ENCODE measurements at regions of chr7 and their contacts with region 1.

Region 1: DNA sequence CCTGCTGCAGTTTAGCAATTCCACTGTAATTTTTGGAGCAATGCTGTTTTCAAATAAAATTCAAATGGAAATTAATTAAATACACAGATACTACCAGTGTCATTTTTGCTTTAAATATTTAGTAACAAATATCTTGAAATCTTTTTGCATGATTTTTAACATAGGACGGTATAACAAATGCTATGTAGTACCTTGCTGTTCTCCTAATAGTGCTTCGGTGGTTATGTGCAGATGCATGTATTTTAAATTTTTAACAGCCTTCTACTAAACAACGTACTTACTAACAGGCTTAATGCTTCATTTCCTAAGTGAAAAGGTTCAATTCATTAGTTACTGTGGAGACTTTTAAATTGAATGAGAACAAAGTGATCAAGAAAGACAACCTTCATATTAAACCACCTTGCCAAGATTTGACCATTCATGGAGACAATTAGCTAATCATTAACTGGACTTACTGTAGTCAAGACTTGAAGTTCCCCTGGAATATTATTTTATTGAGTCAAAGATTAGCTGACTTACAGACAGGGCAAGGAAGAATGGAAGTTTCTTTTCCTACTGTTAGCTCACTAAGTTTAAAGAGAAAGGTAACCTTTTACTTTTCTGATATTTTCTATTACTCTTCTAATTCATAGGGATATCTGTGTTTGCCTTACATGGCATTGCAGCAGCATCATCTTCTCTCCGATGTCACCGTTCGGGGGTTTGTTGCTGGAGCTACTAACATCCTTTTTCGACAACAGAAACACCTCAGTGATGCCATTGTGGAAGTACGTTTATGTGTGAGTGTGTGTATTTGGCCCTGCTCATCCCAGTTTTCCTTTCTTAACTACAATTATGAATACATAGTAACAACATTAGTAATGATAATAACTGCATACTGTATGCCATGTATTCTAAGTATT is 74.3 kb downstream of the AVL9 start:
- DNase-seq: no peak
- H3K4me3 ChIP-seq: no peak overlapping the region
- H3K4me3 Mint-ChIP-seq: no peak overlapping the region
- H3K27ac Mint-ChIP-seq: no peak overlapping the region
- H3K4me1 ChIP-seq: no peaks in the 10 kb centered on the region
- H3K4me1 Mint-ChIP-seq: no peaks in the 10 kb centered on the region
- H3K27me3 ChIP-seq: no peaks in the 10 kb centered on the region
- H3K27me3 Mint-ChIP-seq: no peaks in the 10 kb centered on the region
- CTCF ChIP-seq: no peak

Region 2: DNA sequence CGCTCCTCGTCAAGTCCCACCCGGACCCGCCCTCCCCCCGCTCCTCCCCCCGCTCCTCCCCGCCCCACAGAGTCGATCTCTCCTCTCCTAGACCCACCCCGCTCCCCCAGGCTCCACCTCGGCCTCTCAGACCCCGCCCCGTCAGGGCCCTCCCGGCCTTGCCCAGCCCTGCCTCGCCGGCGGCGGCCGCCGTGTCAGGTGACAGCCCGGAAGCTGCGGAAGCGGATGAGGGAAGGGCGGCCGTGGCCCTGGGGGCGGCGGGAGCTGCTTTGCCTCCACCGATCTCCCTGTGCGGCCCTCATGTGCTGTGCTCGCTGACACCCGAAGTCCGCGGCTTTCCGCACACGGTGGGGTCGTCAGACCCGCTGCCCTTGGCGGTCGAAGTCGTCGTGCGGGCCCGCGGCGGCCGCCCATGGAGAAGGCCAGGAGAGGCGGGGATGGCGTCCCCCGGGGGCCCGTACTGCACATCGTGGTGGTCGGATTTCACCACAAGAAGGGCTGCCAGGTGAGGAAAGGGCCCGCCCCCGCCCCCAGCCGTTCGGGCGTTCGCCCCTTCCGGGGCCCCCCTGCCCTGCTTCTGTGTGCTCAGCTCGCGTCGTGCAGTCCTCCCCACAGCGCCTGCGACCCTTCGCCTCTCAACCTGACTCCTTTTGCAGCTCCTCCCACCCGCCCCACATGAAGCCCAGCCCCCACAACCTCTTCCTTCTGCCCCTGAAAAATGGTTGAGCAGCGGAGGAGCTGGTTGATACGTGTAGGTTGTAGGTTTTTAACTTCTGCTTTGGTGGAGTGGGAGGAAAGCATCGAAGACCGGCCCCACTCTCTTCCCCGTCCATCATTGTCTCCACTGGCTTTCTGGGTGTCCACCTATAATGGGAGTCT is 74.1 kb before region 1 on chr7 and contains the start of gene AVL9:
- CTCF ChIA-PET with region 1: no interaction called
- POLR2A ChIA-PET with region 1: interaction called, 17 read pairs
- intact Hi-C with region 1: no loop called
- DNase-seq: peak; percentile 99
- H3K4me3 ChIP-seq: peak within 1 kb of the TSS; percentile 93
- H3K4me3 Mint-ChIP-seq: peak within 1 kb of the TSS; percentile 79
- H3K27ac Mint-ChIP-seq: peak within 1 kb of the TSS; percentile 83
- H3K4me1 ChIP-seq: 0 out of 2 replicates have a peak, but pooled peaks cover 9% of the 10 kb centered on the region
- H3K4me1 Mint-ChIP-seq: no peaks in the 10 kb centered on the region
- H3K27me3 ChIP-seq: no peaks in the 10 kb centered on the region
- H3K27me3 Mint-ChIP-seq: no peaks in the 10 kb centered on the region
- CTCF ChIP-seq: no peak
- total RNA-seq, gene AVL9: 39.7 and 41.0 TPM in 2 replicates

Region 3: DNA sequence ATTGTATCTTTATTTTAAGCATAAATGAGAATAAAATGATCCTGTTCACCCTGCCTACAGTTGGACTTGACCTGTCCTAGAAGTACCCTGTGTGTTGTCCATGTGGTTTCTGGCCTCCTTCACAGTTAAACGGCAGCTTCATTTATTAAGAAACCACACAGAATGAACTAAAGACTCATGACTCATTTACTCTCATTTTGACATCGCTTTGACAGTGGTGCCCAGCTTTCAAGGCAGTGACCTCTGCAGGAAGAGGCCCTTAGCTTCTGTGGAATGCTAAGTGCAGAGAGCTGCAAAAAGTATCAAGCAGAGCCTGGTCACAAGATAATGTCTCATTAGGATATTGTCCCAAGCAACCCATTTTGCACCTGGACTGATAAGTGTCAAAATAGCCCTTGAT is 19.0 kb after region 1 on chr7:
- CTCF ChIA-PET with region 1: no interaction called
- POLR2A ChIA-PET with region 1: no interaction called
- intact Hi-C with region 1: no loop called
- DNase-seq: no peak
- H3K4me3 ChIP-seq: no peak overlapping the region
- H3K4me3 Mint-ChIP-seq: no peak overlapping the region
- H3K27ac Mint-ChIP-seq: no peak overlapping the region
- H3K4me1 ChIP-seq: peaks cover 24% of the 10 kb centered on the region
- H3K4me1 Mint-ChIP-seq: peaks cover 16% of the 10 kb centered on the region
- H3K27me3 ChIP-seq: no peaks in the 10 kb centered on the region
- H3K27me3 Mint-ChIP-seq: no peaks in the 10 kb centered on the region
- CTCF ChIP-seq: no peak

Measured in Caco-2 (cell line).